Ascending aorta (tissue), 2 donors: ENCODE measurements at regions of chr1 and their contacts with region 1.

Region 1: DNA sequence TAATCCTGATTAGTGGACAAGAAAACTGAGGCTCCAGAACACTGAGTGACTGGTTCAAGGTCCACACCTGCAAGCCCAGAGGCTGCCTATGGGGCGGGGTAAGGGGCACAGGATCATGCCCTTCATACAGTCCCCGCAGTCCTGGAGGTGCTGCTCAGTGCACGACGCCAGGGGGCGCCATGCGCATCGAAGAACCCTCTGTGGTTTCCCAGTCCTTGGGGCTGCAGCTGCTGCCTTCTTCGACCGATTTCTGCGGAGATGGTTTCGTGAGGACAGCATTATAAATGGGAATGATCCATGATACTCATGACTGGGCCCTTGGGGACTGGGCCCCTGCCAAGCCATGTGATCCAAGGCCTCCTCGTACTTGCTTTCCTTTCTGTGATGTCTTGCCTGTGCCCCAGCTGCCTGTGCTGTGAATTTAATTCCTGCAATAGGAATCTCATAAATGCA is 37.1 kb upstream of the ARHGEF10L start:
- DNase-seq: peak; percentile 46 to 92
- H3K4me3 ChIP-seq: no peak overlapping the region
- H3K27ac ChIP-seq: peak overlapping the region in 1 of 2 donors; percentile 64
- H3K4me1 ChIP-seq: peaks cover 0 to 9% of the 10 kb centered on the region in 2 donors
- H3K27me3 ChIP-seq: no peaks in the 10 kb centered on the region
- CTCF ChIP-seq: peak; percentile 89 to 94 (median 90)

Region 2: DNA sequence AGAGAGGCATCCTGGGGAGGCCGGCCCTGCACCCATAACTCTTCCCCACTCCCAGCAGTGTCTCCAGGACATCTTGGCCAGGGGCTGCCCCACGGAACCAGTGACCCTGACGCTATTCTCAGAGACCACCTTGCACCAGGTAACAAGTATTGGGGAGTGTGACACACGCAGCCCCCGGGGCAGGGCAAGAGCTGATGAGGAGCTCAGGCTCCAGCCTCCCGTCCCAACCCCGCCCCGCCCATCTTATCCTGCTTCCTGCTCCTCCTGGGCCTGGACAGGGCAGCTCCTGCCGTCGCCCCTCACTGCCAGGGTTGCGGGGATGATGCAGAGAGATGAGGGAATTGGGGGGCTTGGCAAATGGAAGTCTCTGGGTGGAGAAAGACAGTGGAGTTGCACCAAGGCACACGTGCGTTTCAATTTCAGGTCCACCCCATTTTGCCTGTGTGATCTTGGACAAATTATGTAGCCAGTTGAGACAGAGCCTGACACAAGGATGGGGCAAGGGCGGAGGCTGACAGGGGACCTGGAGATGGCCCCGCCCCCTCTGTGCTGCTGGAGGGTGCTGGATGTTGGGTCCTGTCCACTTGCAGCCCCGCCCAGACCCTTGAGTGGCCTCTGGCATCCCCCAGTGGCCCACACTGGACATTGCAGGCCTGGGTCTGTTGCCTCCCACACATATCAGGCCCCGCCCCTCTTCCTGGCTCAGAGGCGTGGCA is 1469.8 kb before region 1 on chr1:
- intact Hi-C with region 1: no loop called
- DNase-seq: peak; percentile 59 to 94
- H3K4me3 ChIP-seq: no peak overlapping the region
- H3K27ac ChIP-seq: no peak overlapping the region
- H3K4me1 ChIP-seq: peaks cover 2 to 6% of the 10 kb centered on the region in 2 donors
- H3K27me3 ChIP-seq: no peaks in the 10 kb centered on the region
- CTCF ChIP-seq: peak; percentile 100

Region 3: DNA sequence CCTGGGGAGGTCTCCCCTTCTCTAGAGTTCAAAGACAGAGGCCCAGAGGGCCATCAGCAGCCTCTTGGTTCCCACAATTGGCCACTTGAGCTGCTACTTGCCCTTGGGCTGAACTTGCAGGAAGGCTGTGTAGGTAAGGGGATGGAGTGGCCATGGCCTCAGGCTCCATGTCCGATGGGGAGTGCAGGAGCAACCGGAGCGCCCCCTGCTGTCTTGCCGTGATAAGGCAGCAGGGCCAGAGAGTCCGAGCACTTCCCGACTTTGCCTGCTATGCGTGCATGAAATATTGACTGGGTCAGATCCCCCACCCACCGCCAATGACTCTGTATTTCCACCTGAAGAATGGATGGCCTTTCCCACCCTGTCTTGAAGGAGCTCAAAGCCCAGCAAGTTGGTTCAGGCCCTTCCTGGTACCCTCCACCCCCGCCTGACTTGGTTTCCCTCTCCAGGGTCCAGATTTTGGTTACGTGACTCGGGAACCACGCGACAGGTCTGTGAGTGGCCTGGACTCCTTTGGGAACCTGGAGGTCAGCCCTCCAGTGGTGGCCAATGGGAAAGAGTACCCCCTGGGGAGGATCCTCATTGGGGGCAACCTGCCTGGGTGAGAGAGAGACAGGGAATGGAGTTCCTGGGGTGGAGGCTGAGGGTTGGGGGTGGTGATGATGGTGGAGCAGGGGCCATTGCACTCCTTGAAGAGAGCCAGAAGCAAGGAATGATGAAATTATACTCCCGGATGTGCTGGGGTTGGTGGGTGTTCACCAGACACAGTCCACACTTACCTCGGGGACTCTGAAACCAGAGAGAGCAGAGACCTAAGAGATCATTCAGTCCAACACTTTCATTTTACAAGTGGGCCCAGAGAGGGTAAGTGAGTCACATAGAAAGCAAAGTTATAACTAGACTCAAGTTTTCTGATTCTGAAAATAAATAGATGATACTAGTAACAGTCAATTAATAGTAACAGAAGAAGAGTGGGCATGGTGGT is 227.9 kb before region 1 on chr1:
- intact Hi-C with region 1: no loop called
- DNase-seq: no peak
- H3K4me3 ChIP-seq: no peak overlapping the region
- H3K27ac ChIP-seq: no peak overlapping the region
- H3K4me1 ChIP-seq: no peaks in the 10 kb centered on the region
- H3K27me3 ChIP-seq: no peaks in the 10 kb centered on the region
- CTCF ChIP-seq: peak in 1 of 3 experiments; percentile 23

Region 4: GRCh38 chr1:17527036-17527914 is 24.9 kb after region 1 on chr1:
- intact Hi-C with region 1: loop called (anchors 2 kb)
- DNase-seq: no peak
- H3K4me3 ChIP-seq: no peak overlapping the region
- H3K27ac ChIP-seq: peak overlapping the region; percentile 71 to 83
- H3K4me1 ChIP-seq: peaks cover 6 to 17% of the 10 kb centered on the region in 2 donors
- H3K27me3 ChIP-seq: no peaks in the 10 kb centered on the region
- CTCF ChIP-seq: no peak